ENCODE measurements at regions of chr1 and their contacts with region 1.

Region 1: DNA sequence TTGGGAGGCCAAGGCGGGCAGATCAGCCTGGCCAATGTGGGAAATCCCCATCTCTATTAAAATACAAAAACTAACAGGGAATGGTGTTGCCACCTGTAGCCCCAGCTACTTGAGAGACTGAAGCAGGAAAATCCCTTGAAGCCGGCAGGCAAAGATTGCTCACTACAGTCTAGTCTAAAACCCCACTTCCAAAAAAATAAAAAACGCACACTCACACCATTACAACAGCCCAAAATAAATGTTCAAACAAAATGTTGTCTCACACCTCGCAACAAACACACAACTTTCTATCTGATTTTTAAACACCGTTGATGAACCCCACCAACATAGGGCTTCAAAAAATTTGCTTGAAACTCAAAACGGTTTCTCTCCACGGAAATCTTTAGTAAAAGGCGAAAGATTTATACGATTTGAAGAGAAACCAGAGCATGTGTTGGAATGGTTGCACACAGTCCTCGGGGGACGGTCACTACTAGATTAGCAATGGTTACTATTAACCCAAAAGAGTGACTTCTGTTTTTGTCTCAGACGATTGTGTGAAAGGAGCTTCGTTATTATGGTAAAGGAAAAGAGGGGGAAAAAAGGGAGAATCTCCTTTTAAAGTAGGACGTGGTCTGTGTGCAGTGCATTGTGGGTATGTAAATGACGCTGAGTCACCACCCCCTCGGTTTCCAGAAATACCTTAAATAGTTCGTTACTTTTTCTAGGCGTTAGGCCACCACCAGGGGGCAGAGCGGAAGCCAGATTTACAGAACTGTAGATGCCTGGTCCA is at the start of gene RNU5D-1:
- DNase-seq: peak; percentile 98
- ATAC-seq: peak; percentile 85
- H3K4me3 Mint-ChIP-seq: peak within 1 kb of the TSS; percentile 67
- H3K27ac Mint-ChIP-seq: peak within 1 kb of the TSS; percentile 100
- H3K4me1 Mint-ChIP-seq: peaks cover 45% of the 10 kb centered on the region
- H3K27me3 Mint-ChIP-seq: no peaks in the 10 kb centered on the region
- total RNA-seq, gene RNU5D-1: not detected

Region 2: DNA sequence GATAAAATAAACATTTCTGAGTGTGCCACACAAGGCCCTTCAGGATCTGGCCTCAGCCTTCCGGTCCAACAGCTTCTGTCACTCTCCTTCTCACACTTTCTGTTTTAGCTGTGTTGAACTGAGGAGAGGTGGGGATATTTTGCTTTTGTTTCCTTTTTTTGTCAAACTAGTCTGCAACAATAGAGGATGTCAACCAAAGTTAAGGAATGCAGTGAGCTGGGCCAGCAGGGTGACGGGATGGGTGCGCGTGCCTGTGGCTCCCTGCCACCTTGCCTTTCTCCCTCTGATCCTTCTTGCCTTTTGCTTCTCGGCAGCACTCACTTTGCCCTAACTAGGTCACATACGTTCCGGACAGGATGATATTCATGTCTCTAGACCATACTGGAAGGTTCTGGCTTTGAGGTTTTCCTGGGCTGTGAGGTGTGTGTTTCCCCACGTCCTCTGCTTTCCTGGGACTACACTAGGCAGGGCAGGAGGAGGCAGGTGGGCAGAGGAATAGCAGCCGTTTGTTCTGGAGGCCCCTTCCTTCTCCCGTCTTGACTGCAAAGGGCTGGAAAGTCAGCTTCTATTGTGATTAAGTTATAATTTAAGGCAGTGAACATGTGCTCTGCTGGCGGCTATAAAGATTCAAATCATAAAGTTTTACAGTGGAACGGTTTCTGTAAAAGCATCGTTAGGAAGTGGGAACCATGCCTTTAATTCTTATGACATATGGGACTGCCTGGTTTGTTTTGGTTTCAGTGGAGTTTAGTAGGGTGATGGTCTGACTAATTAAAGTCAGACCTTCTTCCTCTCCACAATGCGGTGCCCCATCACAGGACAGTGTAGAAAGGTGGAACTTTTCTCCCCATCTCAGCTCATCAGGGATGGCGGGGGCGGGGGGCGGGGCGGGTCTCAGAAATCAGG is 258.1 kb before region 1 on chr1:
- CTCF ChIA-PET with region 1: no interaction called
- POLR2A ChIA-PET with region 1: no interaction called
- intact Hi-C with region 1: no loop called
- DNase-seq: no peak
- ATAC-seq: no peak
- H3K4me3 Mint-ChIP-seq: no peak overlapping the region
- H3K27ac Mint-ChIP-seq: no peak overlapping the region
- H3K4me1 Mint-ChIP-seq: peaks cover 8% of the 10 kb centered on the region
- H3K27me3 Mint-ChIP-seq: peaks cover 13% of the 10 kb centered on the region

Region 3: DNA sequence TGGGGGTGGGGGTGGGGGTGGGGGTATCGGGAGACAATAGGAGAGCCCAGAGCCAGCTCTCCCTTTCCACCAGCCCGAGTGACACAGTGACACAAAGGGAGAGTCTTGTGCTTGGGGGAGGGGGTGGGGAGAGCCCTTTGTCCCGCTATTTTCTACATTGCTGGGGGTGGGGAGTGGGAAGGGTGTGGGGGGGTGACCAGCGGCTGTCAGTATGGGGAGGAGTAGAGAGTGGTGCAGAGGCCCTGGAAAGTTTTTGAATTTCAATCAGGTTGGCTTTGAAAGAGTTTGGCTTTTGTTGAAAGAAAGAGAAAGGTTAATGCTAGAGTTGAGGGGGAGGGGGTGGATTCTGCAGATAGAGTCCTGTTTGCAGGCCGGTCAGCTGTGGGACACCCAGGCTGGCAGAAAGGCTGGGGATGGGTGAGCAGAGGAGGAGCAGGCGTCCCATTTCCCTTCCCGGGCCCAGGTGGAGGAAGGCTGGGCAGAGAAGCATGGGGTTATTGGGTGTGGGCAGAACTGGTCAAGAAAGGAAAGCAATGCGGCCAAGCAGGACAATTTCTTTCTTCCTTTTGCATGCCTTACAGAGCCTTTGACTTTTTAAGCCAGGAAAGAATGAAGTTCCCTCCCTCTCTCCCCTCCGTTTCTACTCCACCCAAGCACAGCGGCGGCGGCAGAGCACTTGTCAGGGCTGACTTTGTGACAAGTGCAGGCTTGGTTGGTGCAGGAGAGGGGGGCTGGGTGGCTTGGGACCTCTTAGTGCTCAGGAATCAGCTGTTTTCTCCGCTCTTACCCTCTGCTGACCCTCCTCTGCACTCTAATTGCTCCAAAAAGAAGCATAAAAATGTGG is 229.7 kb before region 1 on chr1:
- CTCF ChIA-PET with region 1: no interaction called
- POLR2A ChIA-PET with region 1: no interaction called
- intact Hi-C with region 1: no loop called
- DNase-seq: no peak
- ATAC-seq: no peak
- H3K4me3 Mint-ChIP-seq: no peak overlapping the region
- H3K27ac Mint-ChIP-seq: no peak overlapping the region
- H3K4me1 Mint-ChIP-seq: no peaks in the 10 kb centered on the region
- H3K27me3 Mint-ChIP-seq: peaks cover 2% of the 10 kb centered on the region

Region 4: DNA sequence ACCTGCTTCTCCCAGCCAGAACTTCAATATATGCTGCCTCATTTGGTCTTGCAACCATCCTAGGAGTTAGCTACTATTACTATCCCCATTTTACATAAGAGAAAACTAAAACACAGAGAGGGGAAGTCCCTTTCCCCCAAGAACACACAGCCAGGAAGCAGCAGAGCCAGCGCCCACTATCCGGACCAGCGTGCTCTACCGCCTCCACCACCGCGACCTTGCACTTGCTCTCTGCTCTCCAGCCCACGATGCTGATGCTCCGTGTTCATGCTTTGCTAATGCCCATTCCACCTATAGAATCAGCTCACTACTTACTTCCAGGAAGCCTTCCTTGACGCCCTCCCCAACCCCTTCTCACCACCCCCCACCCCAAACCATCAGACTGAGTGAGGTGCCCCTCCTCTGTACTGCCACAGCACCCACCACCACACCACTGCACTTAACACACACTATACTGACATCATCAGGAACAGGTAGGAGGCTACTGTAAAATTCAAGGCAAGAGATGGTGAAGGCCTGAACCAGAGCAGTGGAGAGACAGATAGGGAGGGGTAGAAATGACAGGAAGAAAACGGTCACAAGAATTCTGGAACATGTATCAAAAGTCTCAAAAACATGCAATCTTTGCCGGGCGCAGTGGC is 66.1 kb before region 1 on chr1:
- CTCF ChIA-PET with region 1: no interaction called
- POLR2A ChIA-PET with region 1: interaction called, 10 read pairs
- intact Hi-C with region 1: no loop called
- DNase-seq: peak; percentile 62
- ATAC-seq: peak; percentile 90
- H3K4me3 Mint-ChIP-seq: peak overlapping the region; percentile 5
- H3K27ac Mint-ChIP-seq: peak overlapping the region; percentile 29
- H3K4me1 Mint-ChIP-seq: peaks cover 15% of the 10 kb centered on the region
- H3K27me3 Mint-ChIP-seq: no peaks in the 10 kb centered on the region

Region 5: DNA sequence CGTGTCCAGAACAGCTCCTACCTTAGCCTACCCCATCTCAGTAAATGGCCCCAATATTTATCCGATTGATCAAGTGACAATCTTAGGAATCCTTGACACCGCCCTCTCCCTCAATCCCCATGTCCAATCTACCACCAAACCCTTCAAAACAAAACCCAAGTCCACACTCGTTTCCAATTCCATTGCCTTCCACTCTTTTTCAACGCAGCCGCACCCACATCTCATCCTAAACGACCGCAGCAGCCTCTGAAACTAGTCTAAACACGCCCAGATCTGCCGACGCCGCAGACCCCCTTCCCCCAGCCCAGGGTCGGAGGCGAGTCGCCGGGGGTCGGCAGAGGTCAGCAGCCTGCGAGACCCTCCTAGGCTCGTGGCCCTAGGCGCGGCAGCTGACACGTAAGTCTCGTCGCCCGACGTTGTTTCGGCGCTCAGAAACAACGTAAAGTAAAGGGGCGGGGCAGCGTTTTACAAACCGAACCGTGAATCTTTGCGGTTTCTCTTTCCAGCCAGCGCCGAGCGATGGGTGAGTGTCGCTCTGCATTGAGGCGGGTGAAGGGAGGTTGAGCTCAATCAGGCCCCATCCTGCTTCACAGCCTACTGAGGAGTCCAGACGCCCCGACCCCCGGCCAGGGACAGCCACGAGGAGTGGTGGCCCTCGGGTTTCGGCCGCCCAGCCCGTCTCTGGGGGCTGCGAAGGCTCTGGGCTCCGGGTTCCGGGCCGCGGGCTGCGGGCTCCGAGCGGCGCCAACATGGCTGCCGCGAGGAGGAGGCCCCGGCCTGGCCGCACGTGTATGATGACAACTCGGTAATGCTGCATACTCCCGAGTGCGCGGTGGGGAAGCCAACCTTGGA is 44.4 kb after region 1 on chr1 and contains the start of gene RPS8:
- CTCF ChIA-PET with region 1: interaction called, 5 read pairs
- POLR2A ChIA-PET with region 1: interaction called, 27 read pairs
- intact Hi-C with region 1: loop called (anchors 1 kb)
- DNase-seq: peak; percentile 94
- ATAC-seq: peak; percentile 84
- H3K4me3 Mint-ChIP-seq: peak within 1 kb of the TSS; percentile 96
- H3K27ac Mint-ChIP-seq: peak within 1 kb of the TSS; percentile 100
- H3K4me1 Mint-ChIP-seq: peaks cover 33% of the 10 kb centered on the region
- H3K27me3 Mint-ChIP-seq: no peaks in the 10 kb centered on the region
- total RNA-seq, gene RPS8: 3,005 to 3,275 TPM

Region 6: GRCh38 chr1:44799770-44800584 is 69.0 kb after region 1 on chr1 and contains the start of gene PLK3:
- CTCF ChIA-PET with region 1: interaction called, 4 read pairs
- POLR2A ChIA-PET with region 1: interaction called, 21 read pairs
- intact Hi-C with region 1: loop called (anchors 2 kb)
- DNase-seq: peak; percentile 99
- ATAC-seq: peak; percentile 84
- H3K4me3 Mint-ChIP-seq: peak within 1 kb of the TSS; percentile 87
- H3K27ac Mint-ChIP-seq: peak within 1 kb of the TSS; percentile 100
- H3K4me1 Mint-ChIP-seq: peaks cover 41% of the 10 kb centered on the region
- H3K27me3 Mint-ChIP-seq: no peaks in the 10 kb centered on the region
- total RNA-seq, gene PLK3: 52.1 to 52.7 TPM

Region 7: GRCh38 chr1:44812822-44813543 is 82.1 kb after region 1 on chr1:
- CTCF ChIA-PET with region 1: interaction called, 19 read pairs
- POLR2A ChIA-PET with region 1: interaction called, 675 read pairs
- intact Hi-C with region 1: loop called in 1 of 2 experiments (anchors 1 kb)
- DNase-seq: no peak
- ATAC-seq: no peak
- H3K4me3 Mint-ChIP-seq: peak overlapping the region; percentile 87
- H3K27ac Mint-ChIP-seq: peak overlapping the region; percentile 25
- H3K4me1 Mint-ChIP-seq: peaks cover 73% of the 10 kb centered on the region
- H3K27me3 Mint-ChIP-seq: no peaks in the 10 kb centered on the region

Region 8: GRCh38 chr1:45913183-45913683 is 1182.3 kb after region 1 on chr1:
- CTCF ChIA-PET with region 1: no interaction called
- POLR2A ChIA-PET with region 1: no interaction called
- intact Hi-C with region 1: no loop called
- DNase-seq: peak; percentile 49
- ATAC-seq: peak; percentile 96
- H3K4me3 Mint-ChIP-seq: no peak overlapping the region
- H3K27ac Mint-ChIP-seq: peak overlapping the region; percentile 64
- H3K4me1 Mint-ChIP-seq: peaks cover 13% of the 10 kb centered on the region
- H3K27me3 Mint-ChIP-seq: no peaks in the 10 kb centered on the region

Measured in activated CD4-positive, alpha-beta T cell treated with anti-CD3 and anti-CD28 coated beads for 36 hours (primary cell).